HepG2 (cell line): ENCODE measurements at regions of chr3 and their contacts with region 1.

Region 1: DNA sequence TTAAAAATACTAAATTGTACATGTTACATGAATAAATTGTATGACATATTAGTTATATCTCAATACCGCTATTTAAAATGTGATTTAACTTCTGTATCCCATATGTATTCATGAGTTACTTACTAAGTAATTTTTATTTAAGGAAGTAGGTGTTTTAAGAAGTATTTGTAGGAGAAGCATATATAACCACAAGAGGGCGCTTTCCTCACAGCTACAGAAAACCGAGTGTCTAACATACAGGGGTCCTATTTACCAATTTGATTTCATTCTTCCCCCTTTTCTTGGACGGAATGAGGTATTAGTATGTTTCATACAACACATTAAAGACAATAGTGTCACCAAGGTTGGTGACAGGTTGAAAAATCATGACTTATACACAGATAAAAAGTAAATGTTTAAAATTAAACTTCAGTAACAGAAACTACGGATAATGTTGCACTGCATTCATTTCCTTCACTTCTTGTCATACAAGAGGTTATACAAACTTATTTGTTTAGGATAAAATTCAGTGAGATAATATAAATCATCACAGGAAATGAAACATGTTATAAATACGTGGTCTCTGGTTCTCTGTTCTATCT is 253.6 kb downstream of the MAGI1 start:
- DNase-seq: peak; percentile 41
- ATAC-seq: peak; percentile 53; the same call in 1 of the 3 replicates
- H3K4me3 ChIP-seq: no peak overlapping the region
- H3K27ac ChIP-seq: no peak overlapping the region
- H3K4me1 ChIP-seq: no peaks in the 10 kb centered on the region
- H3K27me3 ChIP-seq: no peaks in the 10 kb centered on the region
- CTCF ChIP-seq: peak; percentile 68
- EP300 ChIP-seq: no peak
- POLR2A ChIP-seq: no peak
- RAD21 ChIP-seq: 0 out of 2 replicates have a peak, but pooled peaks have one; percentile 11

Region 2: GRCh38 chr3:65126527-65127410 is 658.4 kb before region 1 on chr3:
- CTCF ChIA-PET with region 1: no interaction called
- POLR2A ChIA-PET with region 1: no interaction called
- in situ Hi-C with region 1: no loop called
- intact Hi-C with region 1: no loop called
- DNase-seq: no peak
- ATAC-seq: no peak
- H3K4me3 ChIP-seq: no peak overlapping the region
- H3K27ac ChIP-seq: no peak overlapping the region
- H3K4me1 ChIP-seq: no peaks in the 10 kb centered on the region
- H3K27me3 ChIP-seq: no peaks in the 10 kb centered on the region
- CTCF ChIP-seq: no peak
- EP300 ChIP-seq: no peak
- POLR2A ChIP-seq: no peak
- RAD21 ChIP-seq: no peak

Region 3: DNA sequence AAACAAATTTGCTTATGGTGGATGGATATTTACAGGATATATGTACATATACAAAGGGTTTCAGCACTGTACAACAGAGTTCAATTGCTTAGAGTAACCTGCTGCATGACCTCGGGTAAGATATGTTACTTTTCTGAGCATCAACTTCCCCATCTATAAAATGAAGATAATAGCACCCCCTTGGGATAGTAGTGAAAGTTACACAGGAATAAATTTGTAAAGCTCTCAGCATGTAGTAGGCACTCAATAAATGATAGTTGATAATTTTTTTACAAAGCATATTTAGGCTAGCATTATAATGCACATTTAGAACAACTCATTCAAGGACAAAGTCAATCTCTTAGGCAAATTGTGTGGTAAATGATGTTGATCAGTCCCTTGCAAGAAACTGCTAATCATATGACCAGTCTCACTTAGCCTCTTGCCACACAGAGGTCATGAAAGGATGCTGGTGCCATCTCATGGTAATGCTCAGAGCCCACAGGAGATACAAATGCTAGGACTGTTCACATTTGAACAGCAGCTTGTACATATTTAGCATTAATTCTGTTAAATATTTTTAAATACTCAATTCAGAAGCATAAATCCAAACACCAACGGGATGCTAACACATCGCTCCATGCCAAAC is 129.7 kb after region 1 on chr3:
- CTCF ChIA-PET with region 1: no interaction called
- POLR2A ChIA-PET with region 1: no interaction called
- in situ Hi-C with region 1: no loop called
- intact Hi-C with region 1: loop called (anchors 10 kb)
- DNase-seq: no peak
- ATAC-seq: no peak
- H3K4me3 ChIP-seq: no peak overlapping the region
- H3K27ac ChIP-seq: no peak overlapping the region
- H3K4me1 ChIP-seq: peaks cover 7% of the 10 kb centered on the region
- H3K27me3 ChIP-seq: no peaks in the 10 kb centered on the region
- CTCF ChIP-seq: no peak; the same call in 1 of the 2 replicates
- EP300 ChIP-seq: no peak
- POLR2A ChIP-seq: no peak
- RAD21 ChIP-seq: no peak

Region 4: DNA sequence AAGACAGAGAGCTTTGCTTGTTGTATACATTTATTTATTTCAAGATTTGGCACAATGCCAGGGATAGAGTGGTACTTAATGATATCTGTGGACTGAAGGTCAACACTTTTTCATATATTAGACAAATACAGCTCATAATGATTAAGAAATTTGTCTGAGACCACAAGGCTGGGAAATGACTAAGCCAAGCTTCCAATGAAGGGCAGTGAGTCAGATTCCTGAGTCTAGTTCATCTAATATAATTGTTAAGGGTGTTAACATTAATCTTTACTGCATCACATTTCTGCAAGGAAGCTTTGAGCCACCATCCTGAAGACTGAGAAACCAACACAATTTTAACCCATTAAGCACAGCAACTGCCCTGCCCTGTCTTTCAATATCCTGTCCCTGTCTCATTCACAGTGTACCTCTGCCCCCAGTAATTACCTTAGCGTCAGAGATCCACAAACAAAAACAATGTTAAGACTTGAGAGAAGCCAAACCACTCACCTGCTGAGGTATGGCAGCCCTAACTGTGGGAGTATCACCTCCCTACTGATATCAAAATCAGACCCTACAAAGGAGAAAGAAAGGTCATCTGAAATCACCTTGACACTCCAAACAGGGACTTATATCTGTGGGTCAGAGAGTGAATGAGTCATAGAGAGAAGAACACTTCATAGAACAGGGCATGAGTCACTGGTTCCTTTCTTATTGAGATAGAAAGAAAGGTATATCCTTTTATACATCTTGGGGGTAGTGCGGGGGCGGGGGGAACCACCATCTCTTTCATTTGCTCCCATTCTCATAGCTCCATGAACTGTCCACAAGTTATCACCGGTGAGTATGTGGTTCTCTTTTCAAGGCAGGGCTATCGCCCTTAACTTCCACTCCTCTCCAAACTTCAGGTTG is 178.9 kb after region 1 on chr3:
- CTCF ChIA-PET with region 1: no interaction called
- POLR2A ChIA-PET with region 1: no interaction called
- in situ Hi-C with region 1: no loop called
- intact Hi-C with region 1: loop called (anchors 5 kb)
- DNase-seq: peak; percentile 47
- ATAC-seq: peak; percentile 53
- H3K4me3 ChIP-seq: no peak overlapping the region
- H3K27ac ChIP-seq: peak overlapping the region; percentile 23
- H3K4me1 ChIP-seq: peaks cover 56% of the 10 kb centered on the region
- H3K27me3 ChIP-seq: no peaks in the 10 kb centered on the region
- CTCF ChIP-seq: no peak
- EP300 ChIP-seq: no peak
- POLR2A ChIP-seq: no peak
- RAD21 ChIP-seq: no peak

Region 5: DNA sequence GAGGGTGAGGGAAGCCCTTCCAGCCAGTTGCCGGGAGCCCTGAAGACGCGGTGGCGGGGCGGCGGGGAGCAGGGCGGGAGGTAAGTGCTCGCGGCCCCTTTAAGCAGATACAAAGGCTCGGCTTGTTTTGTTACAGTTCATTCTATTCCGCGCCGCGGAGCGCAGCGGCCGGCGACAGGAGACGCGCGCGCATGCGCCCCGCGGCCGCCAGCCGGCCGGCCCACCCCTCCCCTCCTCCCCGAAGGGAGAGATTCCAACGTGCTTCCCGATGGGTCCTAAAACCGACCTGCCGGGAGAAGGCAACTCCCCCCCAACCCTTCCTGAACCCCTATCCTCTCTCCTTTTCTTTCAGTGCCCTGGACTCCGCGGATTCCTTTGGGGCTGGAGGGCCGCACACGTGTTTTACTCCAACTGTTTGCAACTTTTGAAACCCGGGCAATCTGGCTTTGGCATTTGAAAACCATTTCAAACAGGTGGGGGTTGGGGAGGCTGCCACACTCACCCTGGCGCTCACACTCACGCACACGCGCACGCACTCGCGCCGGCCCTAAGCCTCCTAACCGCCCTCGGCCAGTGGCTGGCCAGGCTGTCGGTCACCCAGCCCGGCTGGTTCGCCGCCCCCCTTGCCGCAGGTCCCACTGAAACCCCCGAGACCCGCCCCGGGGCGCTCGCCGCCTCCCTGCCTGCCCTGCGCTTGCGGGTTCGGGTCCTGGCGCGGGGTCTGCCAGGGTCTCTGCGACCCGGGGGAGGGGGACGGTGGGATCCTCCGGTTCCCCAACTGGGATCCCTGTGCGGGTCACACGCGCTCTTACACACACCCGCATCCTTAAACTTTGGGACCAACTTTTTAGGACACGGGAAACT is 253.8 kb after region 1 on chr3 and contains the start of gene MAGI1:
- CTCF ChIA-PET with region 1: no interaction called
- POLR2A ChIA-PET with region 1: no interaction called
- in situ Hi-C with region 1: no loop called
- intact Hi-C with region 1: loop called (anchors 5 kb)
- DNase-seq: peak; percentile 90
- ATAC-seq: peak; percentile 87
- H3K4me3 ChIP-seq: peak within 1 kb of the TSS; percentile 85 to 97 (median 92)
- H3K27ac ChIP-seq: peak within 1 kb of the TSS; percentile 98
- H3K4me1 ChIP-seq: peaks cover 54% of the 10 kb centered on the region
- H3K27me3 ChIP-seq: no peaks in the 10 kb centered on the region; a peak in 1 of 5 replicates
- CTCF ChIP-seq: no peak; the same call in 1 of the 2 replicates
- EP300 ChIP-seq: no peak
- POLR2A ChIP-seq: peak; percentile 32 to 39; a peak in 2 of 4 replicates
- RAD21 ChIP-seq: no peak
- total RNA-seq, gene MAGI1: 25.3 and 26.0 TPM in 2 replicates

Region 6: GRCh38 chr3:66138336-66139313 is 353.5 kb after region 1 on chr3:
- CTCF ChIA-PET with region 1: interaction called, 22 read pairs
- POLR2A ChIA-PET with region 1: no interaction called
- in situ Hi-C with region 1: loop called (anchors 5 kb)
- intact Hi-C with region 1: loop called (anchors 1 kb)
- DNase-seq: peak; percentile 65
- ATAC-seq: peak; percentile 93
- H3K4me3 ChIP-seq: no peak overlapping the region
- H3K27ac ChIP-seq: no peak overlapping the region
- H3K4me1 ChIP-seq: no peaks in the 10 kb centered on the region
- H3K27me3 ChIP-seq: peaks cover 0 to under 1% of the 10 kb centered on the region in 2 experiments; a peak in 1 of 5 replicates
- CTCF ChIP-seq: peak; percentile 87
- EP300 ChIP-seq: no peak
- POLR2A ChIP-seq: no peak
- RAD21 ChIP-seq: peak; percentile 86

Region 7: DNA sequence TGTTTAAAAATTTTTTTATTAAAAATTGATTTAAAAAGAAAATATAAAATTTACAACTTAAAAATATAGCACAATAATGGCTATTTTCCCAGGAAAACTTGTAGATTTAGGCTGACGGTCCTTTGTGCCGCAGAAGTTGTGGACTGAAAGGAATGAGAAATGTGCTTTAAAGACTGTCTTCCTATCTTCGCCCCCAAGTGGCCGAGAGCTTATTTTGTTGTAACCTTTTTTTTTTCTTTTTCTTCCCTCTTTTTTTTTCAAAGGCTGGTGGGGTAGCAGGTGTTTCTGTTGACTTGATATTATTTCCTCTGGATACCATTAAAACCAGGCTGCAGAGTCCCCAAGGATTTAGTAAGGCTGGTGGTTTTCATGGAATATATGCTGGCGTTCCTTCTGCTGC is 451.1 kb after region 1 on chr3:
- CTCF ChIA-PET with region 1: no interaction called
- POLR2A ChIA-PET with region 1: no interaction called
- in situ Hi-C with region 1: no loop called
- intact Hi-C with region 1: loop called (anchors 10 kb)
- DNase-seq: peak; percentile 17
- ATAC-seq: no peak
- H3K4me3 ChIP-seq: no peak overlapping the region
- H3K27ac ChIP-seq: no peak overlapping the region
- H3K4me1 ChIP-seq: no peaks in the 10 kb centered on the region
- H3K27me3 ChIP-seq: no peaks in the 10 kb centered on the region
- CTCF ChIP-seq: no peak; the same call in 1 of the 2 replicates
- EP300 ChIP-seq: no peak
- POLR2A ChIP-seq: no peak
- RAD21 ChIP-seq: no peak